Posterior cingulate gyrus (tissue), 11 donors: ENCODE measurements at regions of chr14 and their contacts with region 1.

Region 1: GRCh38 chr14:32576088-32576795 is 247.1 kb downstream of the AKAP6 start:
- DNase-seq: peak; percentile 19 to 93 (median 58)

Region 2: GRCh38 chr14:32319362-32320049 is 256.7 kb before region 1 on chr14:
- intact Hi-C with region 1: no loop called
- DNase-seq: no peak

Region 3: GRCh38 chr14:32366256-32366879 is 209.9 kb before region 1 on chr14:
- intact Hi-C with region 1: no loop called
- DNase-seq: peak in 9 of 10 donors; percentile 32 to 90 (median 55)

Region 4: DNA sequence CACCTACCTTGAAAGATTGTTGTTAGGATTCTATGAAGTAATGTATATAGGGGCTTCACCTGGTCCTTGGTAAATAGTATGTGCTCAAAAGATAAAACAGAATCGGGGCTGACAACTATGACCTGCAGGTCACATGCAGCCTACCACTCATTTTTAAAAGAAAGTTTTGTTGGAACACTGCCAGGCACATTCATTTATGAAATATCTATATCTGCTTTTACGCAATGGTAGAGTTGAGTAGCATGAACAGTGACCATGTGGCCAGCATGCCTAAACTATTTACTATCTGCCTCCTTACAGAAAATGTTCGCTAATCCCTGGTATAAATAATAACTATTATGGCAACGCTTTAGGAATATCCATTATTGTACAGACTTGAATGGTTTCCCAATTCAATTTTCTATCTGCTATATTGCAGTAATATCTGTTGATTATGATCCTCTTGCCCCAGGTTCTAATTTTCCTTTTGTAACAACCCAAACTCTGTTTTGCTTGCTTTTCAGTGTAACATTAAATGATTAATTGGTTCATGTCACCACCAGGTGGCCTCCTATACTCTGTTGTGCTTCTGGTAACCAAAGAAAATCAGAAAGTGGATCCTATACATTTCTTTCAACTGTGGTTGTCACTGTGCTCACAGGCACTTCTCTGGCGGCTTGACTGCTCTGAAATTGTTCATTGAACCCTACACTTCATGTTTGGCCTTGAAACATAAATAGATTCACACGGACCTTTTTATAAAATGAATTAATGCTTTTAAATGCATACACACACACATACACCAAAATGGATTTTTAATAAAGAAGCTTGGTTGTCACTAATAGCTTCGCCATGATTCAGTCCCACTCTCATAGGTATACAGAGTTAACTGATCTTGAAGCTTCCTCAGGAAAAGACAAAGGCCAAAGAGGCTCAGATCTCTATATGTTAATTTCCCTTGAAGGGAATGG is 134.8 kb after region 1 on chr14:
- intact Hi-C with region 1: loop called (anchors 2 kb)
- DNase-seq: peak in 3 of 10 donors; percentile 28 to 62 (median 46)

Region 5: GRCh38 chr14:32826404-32827082 is 250.3 kb after region 1 on chr14:
- intact Hi-C with region 1: loop called (anchors 2 kb)
- DNase-seq: peak; percentile 14 to 80 (median 46)

Region 6: DNA sequence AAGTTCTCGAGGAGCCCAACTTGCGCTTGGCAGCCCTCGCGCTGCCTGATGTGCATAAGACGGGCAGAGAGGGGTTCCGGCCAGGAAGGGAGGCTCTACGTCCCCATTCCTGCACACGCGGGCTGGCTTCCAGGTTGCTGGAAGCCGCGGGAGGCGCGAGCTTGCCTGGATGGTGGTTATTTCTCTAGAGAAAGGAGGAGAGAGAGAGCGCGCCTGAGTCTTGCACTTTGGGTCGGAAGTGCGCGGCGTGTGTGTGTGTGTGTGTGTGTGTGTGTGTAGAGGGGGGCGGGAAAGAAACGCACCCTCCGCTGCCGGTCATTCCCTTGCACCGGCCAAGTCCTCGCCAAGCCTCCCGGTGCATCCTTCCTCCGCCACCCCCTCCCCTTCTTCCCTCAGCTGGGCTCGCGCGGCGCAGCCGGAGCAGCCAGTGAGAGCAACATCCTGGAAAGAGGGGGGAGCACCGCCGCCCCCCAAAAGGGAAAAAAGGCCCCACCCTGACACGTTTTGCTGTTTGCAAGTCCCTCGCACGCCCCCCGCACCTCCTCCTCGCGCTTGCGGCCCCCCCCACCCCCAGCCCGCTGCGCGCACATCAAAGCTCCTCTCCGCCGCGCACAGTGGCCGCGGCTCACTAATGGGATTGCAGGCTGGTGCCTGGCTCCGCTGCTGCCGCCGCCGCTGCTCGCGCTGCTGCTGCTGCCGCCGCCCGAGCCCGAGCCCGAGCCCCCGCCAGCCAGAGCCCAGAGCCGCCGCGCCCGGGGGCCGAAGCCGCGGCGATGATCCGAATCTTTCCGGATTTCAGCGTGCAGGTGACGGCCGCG is 358.0 kb after region 1 on chr14:
- intact Hi-C with region 1: loop called (anchors 1 kb)
- DNase-seq: peak; percentile 56 to 94 (median 68)

Region 7: DNA sequence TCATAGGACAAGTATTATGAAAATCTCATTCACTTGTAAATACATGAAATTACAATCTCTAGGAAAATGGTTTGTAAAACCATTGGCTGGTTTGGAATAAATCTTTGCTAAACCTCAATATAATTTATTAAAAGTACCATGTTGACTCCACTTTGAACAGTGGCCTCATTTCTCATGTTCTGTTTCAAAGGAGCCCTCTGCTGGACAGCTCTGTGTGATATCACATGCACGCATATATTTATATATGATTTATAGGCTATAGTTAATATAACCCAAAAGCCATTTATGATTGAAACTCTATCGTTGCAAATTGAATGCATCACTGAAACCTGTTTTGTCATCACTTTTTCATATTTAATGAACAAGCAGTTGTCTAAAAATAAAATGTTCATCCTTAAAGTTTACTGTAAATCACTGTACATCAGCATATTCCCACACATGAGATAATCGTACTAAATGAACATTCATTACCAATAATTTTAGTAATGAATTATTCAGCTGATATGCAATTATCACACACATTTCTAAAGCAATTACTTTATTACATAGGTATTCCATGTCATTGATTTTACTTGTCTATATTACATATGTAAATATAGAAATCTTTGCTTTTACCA is 856.3 kb after region 1 on chr14:
- intact Hi-C with region 1: loop called (anchors 10 kb)
- DNase-seq: peak in 3 of 10 donors; percentile 13 to 58 (median 36)

Region 8: GRCh38 chr14:33792720-33793368 is 1216.6 kb after region 1 on chr14:
- intact Hi-C with region 1: loop called (anchors 2 kb)
- DNase-seq: peak; percentile 80 to 98 (median 90)